ENCODE measurements at regions of chr20 and their contacts with region 1.

Region 1: GRCh38 chr20:53884859-53885541 is 185.4 kb downstream of the BCAS1 start:
- DNase-seq: peak; percentile 55
- ATAC-seq: peak; percentile 91
- H3K4me3 Mint-ChIP-seq: peak overlapping the region; percentile 87
- H3K27ac Mint-ChIP-seq: peak overlapping the region; percentile 96
- H3K4me1 Mint-ChIP-seq: peaks cover 54% of the 10 kb centered on the region
- H3K27me3 Mint-ChIP-seq: no peaks in the 10 kb centered on the region

Region 2: GRCh38 chr20:53708129-53708968 is 176.7 kb before region 1 on chr20:
- POLR2A ChIA-PET with region 1: interaction called, 11 read pairs
- DNase-seq: no peak
- ATAC-seq: peak; percentile 60
- H3K4me3 Mint-ChIP-seq: peak overlapping the region; percentile 82
- H3K27ac Mint-ChIP-seq: peak overlapping the region; percentile 94
- H3K4me1 Mint-ChIP-seq: peaks cover 50% of the 10 kb centered on the region
- H3K27me3 Mint-ChIP-seq: no peaks in the 10 kb centered on the region

Region 3: DNA sequence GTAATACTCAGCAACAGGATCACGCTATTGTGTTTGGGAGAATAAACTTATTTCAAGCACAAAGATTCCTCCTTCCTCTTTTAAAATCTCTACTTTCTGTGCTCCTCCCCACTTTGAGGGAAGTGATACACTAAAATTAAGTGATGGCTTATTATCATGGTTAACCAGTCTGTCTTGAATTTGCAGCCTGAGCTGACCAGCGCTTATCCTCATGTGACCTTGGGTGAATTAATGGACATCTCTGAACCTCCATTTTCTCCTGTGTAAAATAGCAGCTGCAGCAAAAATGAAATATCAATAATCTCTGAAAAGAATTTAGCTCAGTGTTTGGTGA is 37.2 kb before region 1 on chr20:
- POLR2A ChIA-PET with region 1: no interaction called
- DNase-seq: no peak
- ATAC-seq: no peak
- H3K4me3 Mint-ChIP-seq: peak overlapping the region; percentile 79
- H3K27ac Mint-ChIP-seq: peak overlapping the region; percentile 79
- H3K4me1 Mint-ChIP-seq: peaks cover 48% of the 10 kb centered on the region
- H3K27me3 Mint-ChIP-seq: no peaks in the 10 kb centered on the region

Region 4: DNA sequence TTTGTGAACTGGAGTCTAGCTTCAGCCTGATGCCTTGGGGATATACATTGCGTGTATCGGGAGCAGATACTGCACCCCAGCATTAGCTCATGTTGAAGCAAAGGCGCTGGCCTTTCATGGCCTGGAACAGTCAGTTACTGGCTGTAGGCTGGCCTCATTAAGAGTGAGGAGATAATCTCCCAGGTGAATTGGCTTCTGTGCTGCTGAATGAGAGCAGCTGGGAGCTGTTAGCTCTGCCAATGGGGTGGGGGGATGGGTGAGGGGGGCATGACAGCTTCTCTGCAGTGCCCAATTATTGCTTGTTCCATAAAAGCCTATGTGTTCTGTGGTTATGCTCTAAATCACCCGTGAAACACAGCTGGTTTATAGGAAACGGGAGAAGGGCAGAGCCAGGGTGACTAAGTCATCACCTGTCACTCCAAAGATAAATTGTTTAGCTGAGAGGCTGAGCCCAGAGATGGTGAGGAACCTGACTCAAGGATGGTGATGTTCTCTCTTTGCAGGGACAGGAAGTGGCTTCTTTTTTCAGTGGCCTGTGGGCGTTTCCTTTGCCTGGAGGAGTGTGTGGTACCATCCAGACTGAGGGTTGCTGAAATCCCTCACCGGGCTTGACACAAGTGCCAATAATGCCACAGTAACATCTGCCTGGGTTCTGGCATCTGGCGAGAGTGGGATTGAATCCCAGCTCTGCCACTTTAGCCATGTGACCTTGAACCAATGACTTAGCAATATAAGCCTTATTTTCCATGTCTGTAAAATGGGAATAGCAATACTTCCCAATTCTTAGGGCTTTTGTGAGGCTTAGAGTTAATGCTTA is 14.6 kb after region 1 on chr20:
- POLR2A ChIA-PET with region 1: interaction called, 30 read pairs
- DNase-seq: peak; percentile 61
- ATAC-seq: peak; percentile 93
- H3K4me3 Mint-ChIP-seq: peak overlapping the region; percentile 58
- H3K27ac Mint-ChIP-seq: peak overlapping the region; percentile 94
- H3K4me1 Mint-ChIP-seq: peaks cover 52% of the 10 kb centered on the region
- H3K27me3 Mint-ChIP-seq: no peaks in the 10 kb centered on the region

Region 5: GRCh38 chr20:53959911-53960578 is 75.0 kb after region 1 on chr20:
- POLR2A ChIA-PET with region 1: no interaction called
- DNase-seq: no peak
- ATAC-seq: no peak
- H3K4me3 Mint-ChIP-seq: no peak overlapping the region
- H3K27ac Mint-ChIP-seq: no peak overlapping the region
- H3K4me1 Mint-ChIP-seq: peaks cover 5% of the 10 kb centered on the region
- H3K27me3 Mint-ChIP-seq: peaks cover 6% of the 10 kb centered on the region

Region 6: DNA sequence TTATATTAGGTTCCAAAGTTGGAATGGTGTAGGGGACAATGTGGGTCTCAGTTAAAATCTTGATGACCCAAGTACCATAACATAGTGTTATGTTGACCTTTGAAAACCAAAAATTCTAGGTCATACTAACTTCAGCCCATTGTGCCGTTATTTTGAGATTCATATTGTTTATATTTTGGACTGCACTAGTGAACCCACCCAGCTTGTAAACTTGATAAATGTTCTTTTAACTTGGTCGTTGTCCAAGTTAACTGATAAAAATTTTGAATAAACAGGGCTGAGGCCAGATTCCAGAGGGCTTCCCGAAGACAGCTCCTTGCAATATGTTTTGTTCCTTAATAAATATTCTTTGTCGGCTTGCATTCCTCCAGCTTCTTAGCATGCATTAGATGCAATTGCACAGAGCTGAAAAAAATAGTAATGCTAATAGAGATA is 95.0 kb after region 1 on chr20:
- POLR2A ChIA-PET with region 1: no interaction called
- DNase-seq: no peak
- ATAC-seq: no peak
- H3K4me3 Mint-ChIP-seq: no peak overlapping the region
- H3K27ac Mint-ChIP-seq: no peak overlapping the region
- H3K4me1 Mint-ChIP-seq: peaks cover 10% of the 10 kb centered on the region
- H3K27me3 Mint-ChIP-seq: peaks cover 9% of the 10 kb centered on the region